Heart left ventricle (tissue), 16 donors: ENCODE measurements at regions of chr14 and their contacts with region 1.

Region 1: GRCh38 chr14:100677554-100678468 is 48.9 kb upstream of the DLK1 start:
- DNase-seq: peak; percentile 74 to 91 (median 85)
- ATAC-seq: peak; percentile 55 to 78 (median 68)
- H3K4me3 ChIP-seq: peak overlapping the region in 1 of 12 donors; percentile 3
- H3K27ac ChIP-seq: peak overlapping the region; percentile 52 to 92 (median 78)
- H3K4me1 ChIP-seq: peaks cover 0 to 52% (median 35%) of the 10 kb centered on the region in 12 donors
- H3K27me3 ChIP-seq: peaks cover 0 to 26% (median 9%) of the 10 kb centered on the region in 9 donors
- CTCF ChIP-seq: no peak
- POLR2A ChIP-seq: no peak

Region 2: GRCh38 chr14:100645192-100645990 is 32.4 kb before region 1 on chr14:
- intact Hi-C with region 1: no loop called
- DNase-seq: peak; percentile 73 to 88 (median 83)
- ATAC-seq: peak; percentile 55 to 90 (median 87)
- H3K4me3 ChIP-seq: no peak overlapping the region
- H3K27ac ChIP-seq: no peak overlapping the region
- H3K4me1 ChIP-seq: peaks cover 0 to 13% (median 0%) of the 10 kb centered on the region in 12 donors
- H3K27me3 ChIP-seq: peaks cover 0 to 9% (median 0%) of the 10 kb centered on the region in 9 donors
- CTCF ChIP-seq: peak; percentile 49 to 85 (median 70)
- POLR2A ChIP-seq: no peak

Region 3: DNA sequence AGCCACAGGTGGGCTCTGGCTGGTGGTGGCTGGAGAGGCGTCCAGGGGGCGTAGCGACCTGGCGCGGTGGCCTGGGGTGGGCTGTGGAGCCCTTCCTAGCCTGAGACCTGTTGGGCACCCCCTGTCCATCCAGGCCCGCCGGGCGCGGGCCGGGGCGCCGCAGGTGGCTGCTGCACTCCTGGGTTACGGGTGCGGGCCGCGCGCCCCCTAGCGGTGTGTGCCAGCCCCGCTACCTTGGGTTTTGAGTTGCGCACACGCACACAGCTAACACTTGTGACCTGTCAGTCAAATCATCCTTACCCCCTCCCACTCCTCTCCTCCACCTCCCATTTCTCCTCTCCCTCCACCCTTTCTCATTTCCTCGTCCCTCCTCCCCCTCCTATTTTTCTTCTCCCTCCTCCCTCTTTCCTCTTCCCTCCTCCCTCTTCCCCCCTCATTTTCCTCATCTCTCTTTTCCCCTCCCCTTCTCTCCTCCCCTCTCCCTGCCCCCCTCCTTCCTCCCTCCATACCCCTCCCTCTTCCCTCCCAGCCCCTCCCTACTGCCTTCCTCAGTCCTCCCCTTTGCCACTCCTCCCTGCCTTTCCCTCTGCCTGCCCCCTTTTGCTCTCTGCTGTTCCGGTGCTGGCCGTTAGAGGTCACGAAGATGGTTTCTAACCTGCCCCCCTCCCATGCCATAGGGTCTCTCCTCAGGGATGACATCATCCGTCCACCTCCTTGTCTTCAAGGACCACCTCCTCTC is 150.4 kb after region 1 on chr14:
- intact Hi-C with region 1: loop called in 2 of 10 experiments (anchors 10 kb)
- DNase-seq: no peak
- ATAC-seq: peak in 3 of 4 donors; percentile 16 to 39 (median 33)
- H3K4me3 ChIP-seq: peak overlapping the region in 9 of 12 donors; percentile 31 to 60 (median 46)
- H3K27ac ChIP-seq: no peak overlapping the region
- H3K4me1 ChIP-seq: no peaks in the 10 kb centered on the region
- H3K27me3 ChIP-seq: peaks cover 9 to 77% (median 41%) of the 10 kb centered on the region in 9 donors
- CTCF ChIP-seq: peak in 8 of 12 donors; percentile 12 to 35 (median 30)
- POLR2A ChIP-seq: no peak